ENCODE measurements at regions of chr19 and their contacts with region 1.

Region 1: DNA sequence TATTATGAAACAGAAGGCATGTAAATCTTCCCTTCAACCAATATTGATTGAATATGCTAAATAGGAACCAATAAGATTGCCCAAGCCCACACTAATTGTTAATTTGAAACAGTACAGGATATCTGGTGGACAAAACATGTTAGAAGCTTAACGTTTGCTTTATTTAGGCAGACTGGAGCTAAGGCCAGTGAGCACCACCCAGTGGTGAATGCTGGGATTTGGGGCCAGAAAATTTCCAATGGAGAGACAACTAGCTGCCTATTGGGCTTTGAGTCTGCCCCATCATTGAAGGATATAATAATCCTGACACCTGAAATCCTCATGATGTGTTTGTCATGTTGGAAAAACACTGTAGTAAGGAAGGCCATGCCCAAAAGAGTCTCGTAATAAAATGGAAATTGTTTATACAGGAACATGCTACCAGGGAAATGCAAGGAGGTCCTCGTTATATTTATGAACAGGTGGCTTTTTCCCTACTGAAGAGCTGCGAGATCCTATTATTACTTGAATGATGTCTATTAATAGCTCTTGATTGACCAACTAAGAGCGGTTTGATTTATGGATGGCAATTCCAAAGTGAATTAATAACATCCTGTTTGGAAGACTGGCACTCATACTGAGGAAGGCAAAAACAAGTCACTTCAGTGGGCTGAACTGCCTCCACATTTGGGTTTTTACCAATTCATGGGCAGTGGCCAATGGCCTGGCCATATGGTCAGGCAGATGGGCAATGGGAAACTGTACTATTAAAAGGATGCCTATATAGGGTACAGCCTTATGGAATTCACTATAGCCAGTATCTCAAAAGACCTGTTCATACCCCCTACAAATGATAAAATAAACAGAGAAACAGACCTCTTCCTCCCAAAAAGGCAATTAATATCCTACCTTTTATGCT is 8.7 kb downstream of the SIGLECL1 start:
- DNase-seq: peak; percentile 67
- H3K4me3 Mint-ChIP-seq: no peak overlapping the region
- H3K27ac Mint-ChIP-seq: no peak overlapping the region
- H3K4me1 Mint-ChIP-seq: peaks cover 14% of the 10 kb centered on the region
- H3K27me3 Mint-ChIP-seq: peaks cover 21% of the 10 kb centered on the region

Region 2: DNA sequence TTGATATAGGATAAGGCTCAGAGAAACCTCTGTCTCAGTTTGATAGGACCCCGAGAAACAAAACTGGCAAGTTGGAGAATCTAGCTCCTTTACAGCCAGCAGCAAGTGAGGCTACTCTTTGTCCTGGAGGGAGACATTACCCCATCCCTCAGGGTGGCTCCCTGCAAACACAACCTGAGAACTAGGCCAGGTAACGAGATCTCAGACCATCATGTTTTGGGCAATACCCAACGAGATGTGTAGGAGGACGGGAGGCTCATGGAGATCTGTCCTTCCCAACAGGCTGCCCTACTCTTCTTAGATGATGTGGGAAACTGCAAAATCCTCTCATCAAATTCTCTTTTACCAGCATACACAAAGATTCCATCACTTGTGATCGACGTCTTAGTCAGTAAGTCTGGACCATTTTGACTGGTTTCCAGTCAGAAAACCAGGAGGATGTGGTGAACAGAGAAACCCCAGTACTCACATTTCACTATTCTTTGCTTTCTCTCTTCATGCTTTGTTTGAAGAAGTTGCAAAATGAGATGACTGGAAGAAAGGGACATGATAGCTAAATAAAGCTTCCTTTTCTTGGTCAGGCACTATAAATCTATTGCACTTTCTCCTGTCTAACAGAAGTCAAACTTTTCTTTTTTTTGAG is 145.4 kb before region 1 on chr19:
- CTCF ChIA-PET with region 1: interaction called, 3 read pairs
- POLR2A ChIA-PET with region 1: no interaction called
- intact Hi-C with region 1: loop called (anchors 1 kb)
- DNase-seq: no peak
- H3K4me3 Mint-ChIP-seq: no peak overlapping the region
- H3K27ac Mint-ChIP-seq: peak overlapping the region; percentile 90
- H3K4me1 Mint-ChIP-seq: peaks cover 24% of the 10 kb centered on the region
- H3K27me3 Mint-ChIP-seq: peaks cover 3% of the 10 kb centered on the region

Region 3: DNA sequence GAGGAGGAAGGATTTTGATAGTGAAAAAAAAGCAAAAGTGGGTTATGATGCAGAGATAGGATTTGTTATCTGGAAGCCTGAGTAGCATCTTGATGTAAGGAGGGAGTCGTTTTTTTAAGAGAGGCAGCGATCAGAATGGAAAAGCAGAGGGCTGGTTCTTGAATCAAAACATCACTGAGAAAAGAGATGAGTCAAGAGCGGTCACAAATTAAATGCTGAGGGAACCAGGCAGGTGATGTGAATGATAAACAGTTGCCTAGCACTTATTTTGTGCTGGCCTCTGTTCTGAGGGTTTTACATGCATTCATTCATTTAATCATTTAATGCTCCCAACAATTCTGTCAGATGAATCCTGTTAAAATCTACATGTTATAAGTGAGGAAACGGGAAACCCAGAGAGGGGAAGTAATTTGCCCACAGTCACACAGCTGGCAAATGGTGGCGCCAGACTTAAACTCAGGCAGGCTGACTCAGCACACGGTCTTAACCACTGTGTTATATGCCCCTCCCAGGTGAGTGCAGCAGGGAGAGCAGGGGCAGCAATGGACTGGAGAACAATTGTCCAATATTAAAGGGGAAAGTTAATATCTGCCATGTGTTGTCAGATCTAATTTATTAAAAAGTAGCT is 12.7 kb after region 1 on chr19:
- CTCF ChIA-PET with region 1: interaction called, 28 read pairs
- POLR2A ChIA-PET with region 1: no interaction called
- intact Hi-C with region 1: loop called (anchors 2 kb)
- DNase-seq: peak; percentile 57
- H3K4me3 Mint-ChIP-seq: no peak overlapping the region
- H3K27ac Mint-ChIP-seq: peak overlapping the region; percentile 71
- H3K4me1 Mint-ChIP-seq: peaks cover 22% of the 10 kb centered on the region
- H3K27me3 Mint-ChIP-seq: no peaks in the 10 kb centered on the region

Measured in activated CD4-positive, alpha-beta memory T cell treated with anti-CD3 and anti-CD28 coated beads for 36 hours (primary cell).